ENCODE measurements at regions of chr5 and their contacts with region 1.

Region 1: DNA sequence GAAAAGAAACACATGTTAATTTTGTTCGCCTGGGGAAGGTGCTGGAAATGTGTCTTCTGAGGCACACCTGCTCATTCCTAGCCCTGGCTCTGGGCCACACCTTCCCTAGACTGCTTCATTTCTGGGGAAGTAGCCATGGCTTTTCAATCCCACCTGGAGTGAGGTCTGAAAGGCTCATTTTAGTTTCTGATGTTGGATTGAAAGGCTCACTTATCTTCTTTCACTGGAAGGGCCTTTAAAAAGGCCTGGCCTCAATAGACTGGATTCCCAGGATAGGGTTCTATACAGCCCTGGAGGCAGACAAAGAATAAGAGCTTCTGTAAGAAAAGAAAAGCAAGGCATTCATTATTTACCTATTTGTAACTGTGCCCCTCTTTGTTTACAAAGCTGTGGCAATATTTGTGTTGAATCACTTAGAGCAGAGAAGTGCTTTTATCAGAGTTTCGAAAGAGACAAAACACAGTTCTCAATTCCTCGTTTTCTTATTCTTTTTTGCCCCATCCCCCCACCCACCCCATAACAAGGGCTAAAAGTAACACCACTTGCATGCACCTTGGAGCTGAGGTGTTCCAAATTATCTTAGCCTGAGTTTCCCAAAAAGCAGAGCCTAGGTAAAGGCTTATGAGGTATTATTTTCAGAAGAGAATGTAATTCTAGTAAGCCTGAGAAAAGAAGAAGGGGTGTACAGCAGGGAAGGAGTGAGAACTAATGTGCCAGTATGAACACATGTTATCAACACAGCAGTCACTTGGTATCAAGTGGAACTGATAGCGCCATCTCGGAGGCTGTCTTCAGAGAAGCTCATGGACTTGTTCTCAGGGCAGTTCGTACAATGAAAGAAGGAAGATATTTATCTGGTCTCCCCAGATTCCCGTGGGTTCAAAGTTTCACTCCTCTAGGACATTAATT is 413.1 kb downstream of the KCTD16 start:
- DNase-seq: no peak
- ATAC-seq: no peak
- H3K4me3 ChIP-seq: no peak overlapping the region
- H3K27ac ChIP-seq: no peak overlapping the region
- H3K4me1 ChIP-seq: no peaks in the 10 kb centered on the region
- H3K27me3 ChIP-seq: no peaks in the 10 kb centered on the region
- CTCF ChIP-seq: no peak
- POLR2A ChIP-seq: no peak

Region 2: DNA sequence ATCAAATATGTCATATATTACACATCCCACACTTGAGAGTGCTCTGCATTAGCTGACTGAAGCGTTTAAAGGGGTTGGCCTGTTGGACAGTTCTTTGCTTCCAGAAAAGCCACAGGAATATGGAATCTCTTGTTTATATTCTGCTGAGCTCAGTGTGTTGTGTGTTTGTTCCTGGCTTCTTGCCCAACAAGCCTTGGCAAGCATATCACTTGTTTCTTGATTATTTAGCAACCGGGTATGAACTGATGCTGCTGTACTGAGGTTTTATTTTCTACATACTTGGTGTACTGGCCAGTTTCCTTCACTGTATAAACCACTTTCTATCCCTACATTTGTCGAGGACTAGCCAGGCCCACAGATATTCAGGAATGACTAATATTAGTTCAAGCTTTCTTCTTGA is 34.2 kb before region 1 on chr5:
- in situ Hi-C with region 1: no loop called
- intact Hi-C with region 1: no loop called
- DNase-seq: peak in 1 of 2 donors; percentile 15
- ATAC-seq: no peak
- H3K4me3 ChIP-seq: no peak overlapping the region
- H3K27ac ChIP-seq: no peak overlapping the region
- H3K4me1 ChIP-seq: no peaks in the 10 kb centered on the region
- H3K27me3 ChIP-seq: no peaks in the 10 kb centered on the region
- CTCF ChIP-seq: no peak
- POLR2A ChIP-seq: no peak

Region 3: GRCh38 chr5:144566747-144567420 is 16.9 kb before region 1 on chr5:
- in situ Hi-C with region 1: no loop called
- intact Hi-C with region 1: loop called (anchors 1 kb)
- DNase-seq: no peak
- ATAC-seq: no peak
- H3K4me3 ChIP-seq: no peak overlapping the region
- H3K27ac ChIP-seq: no peak overlapping the region
- H3K4me1 ChIP-seq: no peaks in the 10 kb centered on the region
- H3K27me3 ChIP-seq: no peaks in the 10 kb centered on the region
- CTCF ChIP-seq: no peak
- POLR2A ChIP-seq: no peak

Region 4: GRCh38 chr5:144659634-144660227 is 75.9 kb after region 1 on chr5:
- in situ Hi-C with region 1: no loop called
- intact Hi-C with region 1: no loop called
- DNase-seq: no peak
- ATAC-seq: no peak
- H3K4me3 ChIP-seq: no peak overlapping the region
- H3K27ac ChIP-seq: no peak overlapping the region
- H3K4me1 ChIP-seq: no peaks in the 10 kb centered on the region
- H3K27me3 ChIP-seq: no peaks in the 10 kb centered on the region
- CTCF ChIP-seq: no peak
- POLR2A ChIP-seq: no peak

Region 5: GRCh38 chr5:145157841-145158240 is 574.0 kb after region 1 on chr5:
- in situ Hi-C with region 1: no loop called
- intact Hi-C with region 1: no loop called
- DNase-seq: no peak
- ATAC-seq: no peak
- H3K4me3 ChIP-seq: no peak overlapping the region
- H3K27ac ChIP-seq: no peak overlapping the region
- H3K4me1 ChIP-seq: no peaks in the 10 kb centered on the region
- H3K27me3 ChIP-seq: no peaks in the 10 kb centered on the region
- CTCF ChIP-seq: no peak
- POLR2A ChIP-seq: no peak